ENCODE measurements at regions of chr12 and their contacts with region 1.

Region 1: GRCh38 chr12:56593909-56594621 is 36.1 kb downstream of the BAZ2A start:
- DNase-seq: no peak
- ATAC-seq: peak; percentile 80
- H3K4me3 ChIP-seq: no peak overlapping the region
- H3K27ac ChIP-seq: no peak overlapping the region
- H3K4me1 ChIP-seq: no peaks in the 10 kb centered on the region; the same call in 1 of the 2 replicates
- H3K27me3 ChIP-seq: no peaks in the 10 kb centered on the region
- CTCF ChIP-seq: peak; percentile 83 to 94 (median 91)
- EP300 ChIP-seq: no peak
- POLR2A ChIP-seq: 0 out of 2 replicates have a peak, but pooled peaks have one; percentile 35
- RAD21 ChIP-seq: peak; percentile 88

Region 2: GRCh38 chr12:56521590-56522371 is 72.3 kb before region 1 on chr12 and contains the start of gene RBMS2:
- CTCF ChIA-PET with region 1: interaction called, 9 read pairs
- POLR2A ChIA-PET with region 1: interaction called, 7 read pairs
- RAD21 ChIA-PET with region 1: no interaction called
- SMC1A ChIA-PET with region 1: interaction called, 10 read pairs
- in situ Hi-C with region 1: loop called (anchors 5 kb)
- intact Hi-C with region 1: no loop called
- DNase-seq: no peak
- ATAC-seq: peak; percentile 95
- H3K4me3 ChIP-seq: peak within 1 kb of the TSS; percentile 55; the same call in 1 of the 2 replicates
- H3K27ac ChIP-seq: 0 out of 2 replicates have a peak within 1 kb of the TSS, but pooled peaks have one; percentile 18
- H3K4me1 ChIP-seq: peaks cover 4% of the 10 kb centered on the region; the same call in 1 of the 2 replicates
- H3K27me3 ChIP-seq: no peaks in the 10 kb centered on the region; a peak in 1 of 4 replicates
- CTCF ChIP-seq: no peak
- EP300 ChIP-seq: no peak
- POLR2A ChIP-seq: no peak
- RAD21 ChIP-seq: no peak
- polyA plus RNA-seq, gene RBMS2: 0.90 to 1.1 TPM

Measured in GM12878 (cell line).